Left ventricle myocardium inferior (tissue), 1 donor: ENCODE measurements at regions of chr1 and their contacts with region 1.

Region 1: GRCh38 chr1:43227143-43227764 is 42.5 kb upstream of the TMEM125 start:
- DNase-seq: peak; percentile 76
- H3K4me3 ChIP-seq: no peak overlapping the region
- H3K27ac ChIP-seq: no peak overlapping the region
- H3K4me1 ChIP-seq: peaks cover 16% of the 10 kb centered on the region
- H3K27me3 ChIP-seq: no peaks in the 10 kb centered on the region
- CTCF ChIP-seq: peak; percentile 94

Region 2: DNA sequence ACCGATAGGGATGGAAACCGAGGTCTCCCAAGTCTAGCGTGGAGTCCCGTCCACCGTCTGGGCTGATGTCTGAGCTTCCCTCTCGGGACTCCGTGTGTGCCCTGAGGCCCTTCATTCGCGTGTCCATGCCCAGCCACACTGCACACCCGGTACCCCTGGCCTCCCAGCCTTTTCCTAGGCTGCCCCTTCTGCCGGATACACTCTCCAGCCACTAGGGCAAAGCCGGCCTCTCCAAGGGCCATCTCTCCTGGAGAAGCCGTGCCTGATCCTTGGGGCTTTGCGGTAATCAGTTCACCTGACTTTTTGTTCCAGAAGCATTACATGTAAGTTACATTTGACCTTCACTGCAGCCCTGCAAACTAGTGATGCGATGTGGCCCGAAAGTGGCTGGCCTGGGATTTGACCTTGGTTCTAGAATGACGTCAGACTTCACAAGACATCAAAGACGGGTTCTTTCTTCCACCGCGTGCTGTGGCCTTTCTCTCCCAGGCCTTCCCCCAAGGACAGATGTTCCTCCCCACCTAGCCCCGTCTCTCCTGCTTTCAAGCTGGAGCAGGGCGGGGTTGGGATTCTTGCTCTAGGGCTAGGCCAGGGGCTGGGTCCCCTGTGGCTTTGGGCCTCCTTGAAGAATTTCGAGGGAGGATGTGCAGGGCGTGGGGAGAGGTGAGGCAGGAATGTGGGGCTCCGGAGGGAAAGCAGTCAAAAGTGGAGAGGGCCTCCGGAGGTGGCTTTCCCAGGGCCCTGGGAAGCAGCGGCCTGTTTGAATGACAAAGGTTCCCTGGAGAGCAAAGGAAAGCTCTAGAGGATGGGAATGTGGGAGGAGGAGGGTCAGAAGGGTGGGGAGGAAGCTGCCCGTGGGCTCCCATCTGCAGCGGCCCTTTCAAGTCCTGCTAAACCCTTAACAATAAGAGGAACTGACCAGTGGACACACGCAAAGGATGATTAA is 218.9 kb before region 1 on chr1:
- intact Hi-C with region 1: no loop called
- DNase-seq: no peak
- H3K4me3 ChIP-seq: no peak overlapping the region
- H3K27ac ChIP-seq: no peak overlapping the region
- H3K4me1 ChIP-seq: peaks cover 4% of the 10 kb centered on the region
- H3K27me3 ChIP-seq: peaks cover 36% of the 10 kb centered on the region
- CTCF ChIP-seq: no peak

Region 3: DNA sequence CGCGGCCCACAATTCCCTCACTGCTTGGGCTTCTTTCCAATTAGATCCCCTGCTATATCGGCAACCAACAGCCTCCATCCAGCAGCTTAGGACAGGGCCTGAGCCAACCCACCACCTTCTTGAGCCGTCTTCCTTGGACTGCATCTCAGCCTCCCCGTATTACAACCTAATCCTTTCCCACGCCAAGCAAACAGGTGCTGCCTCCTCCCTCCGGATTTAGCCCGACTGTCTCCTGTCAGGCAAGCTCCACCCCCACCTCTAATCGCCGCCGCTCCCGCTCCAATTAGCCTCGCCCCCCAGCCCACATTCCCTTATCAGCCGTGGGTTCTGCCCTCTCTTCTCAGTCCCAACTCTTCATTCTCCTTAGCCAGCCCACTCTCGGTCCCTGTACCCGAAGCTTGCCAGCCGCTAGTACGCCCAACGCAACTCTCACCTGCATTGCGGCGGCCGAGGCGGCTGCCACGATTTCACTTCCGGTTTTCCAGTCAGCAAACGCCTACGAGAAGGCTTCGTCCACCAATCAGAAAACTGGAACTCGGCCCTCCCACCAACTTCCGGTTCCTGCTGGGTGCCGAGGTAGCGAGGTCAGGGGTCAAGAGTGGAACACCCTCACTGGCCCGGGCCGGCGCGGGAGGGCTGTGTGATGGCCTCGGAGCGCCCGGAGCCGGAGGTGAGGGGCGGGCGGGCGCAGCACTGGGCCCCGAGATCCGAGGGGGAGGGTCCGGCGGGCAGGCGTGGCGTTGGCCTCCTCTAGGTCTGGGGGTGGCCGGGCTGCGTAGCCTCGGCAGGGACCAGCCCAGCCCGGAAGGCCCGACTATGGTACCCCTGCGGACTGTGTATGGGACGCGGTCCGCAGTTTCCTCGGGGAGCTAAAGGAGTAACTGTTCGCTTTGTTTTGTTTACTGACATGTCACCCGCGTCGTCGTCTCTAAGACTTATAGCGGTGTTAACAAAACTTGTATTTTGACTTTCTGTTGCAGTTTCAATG is 162.4 kb after region 1 on chr1 and contains the starts of genes MED8 and SZT2:
- intact Hi-C with region 1: loop called (anchors 10 kb)
- DNase-seq: peak; percentile 95
- H3K4me3 ChIP-seq: peak within 1 kb of the TSS; percentile 90
- H3K27ac ChIP-seq: peak within 1 kb of the TSS; percentile 89
- H3K4me1 ChIP-seq: peaks cover 44% of the 10 kb centered on the region
- H3K27me3 ChIP-seq: no peaks in the 10 kb centered on the region
- CTCF ChIP-seq: no peak
- total RNA-seq, gene MED8: 15.7 TPM
- total RNA-seq, gene SZT2: 24.8 TPM

Region 4: GRCh38 chr1:43414634-43415223 is 187.5 kb after region 1 on chr1:
- intact Hi-C with region 1: loop called (anchors 2 kb)
- DNase-seq: peak; percentile 38
- H3K4me3 ChIP-seq: no peak overlapping the region
- H3K27ac ChIP-seq: no peak overlapping the region
- H3K4me1 ChIP-seq: peaks cover 12% of the 10 kb centered on the region
- H3K27me3 ChIP-seq: no peaks in the 10 kb centered on the region
- CTCF ChIP-seq: peak; percentile 74

Region 5: GRCh38 chr1:43522776-43523480 is 295.7 kb after region 1 on chr1:
- intact Hi-C with region 1: no loop called
- DNase-seq: no peak
- H3K4me3 ChIP-seq: no peak overlapping the region
- H3K27ac ChIP-seq: no peak overlapping the region
- H3K4me1 ChIP-seq: no peaks in the 10 kb centered on the region
- H3K27me3 ChIP-seq: peaks cover 72% of the 10 kb centered on the region
- CTCF ChIP-seq: no peak